ENCODE measurements at regions of chr15 and their contacts with region 1.

Region 1: GRCh38 chr15:41774062-41774881 is at the start of gene MAPKBP1:
- DNase-seq: peak; percentile 93
- H3K4me3 ChIP-seq: peak within 1 kb of the TSS; percentile 90
- CTCF ChIP-seq: peak; percentile 99

Region 2: DNA sequence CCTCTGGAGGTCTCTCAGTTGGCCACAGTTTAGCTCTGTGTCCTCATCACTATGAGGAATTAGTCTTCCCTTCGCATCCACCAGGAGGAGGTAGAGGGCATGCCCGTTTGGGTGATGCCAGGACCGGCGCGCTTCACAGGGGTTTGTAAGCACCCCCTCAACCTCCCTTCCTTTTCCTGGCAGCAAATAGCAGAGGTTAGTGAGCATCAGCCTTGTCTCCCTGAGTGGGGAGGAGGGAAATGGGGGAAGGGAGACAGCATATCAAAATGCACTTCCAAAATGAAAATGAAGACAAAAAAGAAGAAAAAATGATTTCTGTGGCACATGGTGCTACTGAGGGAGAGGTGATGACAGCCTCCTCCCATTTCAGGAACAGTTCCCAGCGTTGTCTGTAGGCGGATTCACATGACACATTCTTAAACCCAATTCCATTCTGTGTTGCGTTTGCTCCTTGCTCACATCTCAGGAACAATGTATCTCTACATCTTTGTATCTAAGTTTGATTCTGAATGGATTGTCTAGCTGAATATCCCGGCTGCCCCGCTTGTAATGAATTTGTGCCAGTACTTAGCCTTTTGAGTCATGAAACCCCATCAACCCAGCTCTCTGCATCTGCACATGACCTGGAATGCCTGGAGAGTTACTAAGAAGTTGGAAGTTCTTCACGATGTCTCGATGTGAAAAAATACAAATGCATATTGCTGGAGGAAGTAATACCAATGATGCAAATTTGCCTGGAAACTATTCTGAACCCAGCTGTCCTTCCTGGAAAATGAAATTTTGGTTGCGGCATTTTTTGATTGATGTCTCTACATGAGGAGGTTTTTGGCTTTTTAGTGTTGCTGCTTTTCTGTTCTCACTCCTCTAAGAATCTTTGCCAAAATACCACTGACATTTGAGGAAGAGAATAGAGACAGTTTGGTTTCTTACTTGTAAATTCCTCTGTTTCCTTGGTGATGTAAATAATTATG is 170.0 kb before region 1 on chr15:
- CTCF ChIA-PET with region 1: interaction called, 20 read pairs
- POLR2A ChIA-PET with region 1: interaction called, 3 read pairs
- DNase-seq: peak; percentile 47
- H3K4me3 ChIP-seq: peak overlapping the region; percentile 50
- CTCF ChIP-seq: peak; percentile 86

Region 3: DNA sequence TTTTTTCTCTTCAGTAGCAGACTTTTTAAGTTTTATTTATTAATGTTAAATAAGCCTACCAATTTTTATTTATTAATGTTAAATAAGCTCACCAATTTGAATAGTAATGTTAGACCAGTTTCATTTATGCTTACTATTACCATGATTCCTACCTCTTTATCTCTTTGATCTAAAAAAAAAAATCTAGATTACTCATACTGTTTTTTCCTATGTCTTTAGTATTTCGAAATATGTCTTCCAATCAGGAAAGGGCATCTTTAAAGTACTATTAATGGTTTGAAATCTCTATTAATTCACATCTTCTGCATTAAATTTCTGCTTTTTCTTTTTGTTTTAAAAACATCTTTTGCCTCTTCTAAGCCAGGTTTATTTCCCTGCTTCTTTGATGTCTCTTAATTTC is 27.5 kb before region 1 on chr15:
- CTCF ChIA-PET with region 1: interaction called, 15 read pairs
- POLR2A ChIA-PET with region 1: no interaction called
- DNase-seq: no peak
- H3K4me3 ChIP-seq: no peak overlapping the region
- CTCF ChIP-seq: no peak

Region 4: DNA sequence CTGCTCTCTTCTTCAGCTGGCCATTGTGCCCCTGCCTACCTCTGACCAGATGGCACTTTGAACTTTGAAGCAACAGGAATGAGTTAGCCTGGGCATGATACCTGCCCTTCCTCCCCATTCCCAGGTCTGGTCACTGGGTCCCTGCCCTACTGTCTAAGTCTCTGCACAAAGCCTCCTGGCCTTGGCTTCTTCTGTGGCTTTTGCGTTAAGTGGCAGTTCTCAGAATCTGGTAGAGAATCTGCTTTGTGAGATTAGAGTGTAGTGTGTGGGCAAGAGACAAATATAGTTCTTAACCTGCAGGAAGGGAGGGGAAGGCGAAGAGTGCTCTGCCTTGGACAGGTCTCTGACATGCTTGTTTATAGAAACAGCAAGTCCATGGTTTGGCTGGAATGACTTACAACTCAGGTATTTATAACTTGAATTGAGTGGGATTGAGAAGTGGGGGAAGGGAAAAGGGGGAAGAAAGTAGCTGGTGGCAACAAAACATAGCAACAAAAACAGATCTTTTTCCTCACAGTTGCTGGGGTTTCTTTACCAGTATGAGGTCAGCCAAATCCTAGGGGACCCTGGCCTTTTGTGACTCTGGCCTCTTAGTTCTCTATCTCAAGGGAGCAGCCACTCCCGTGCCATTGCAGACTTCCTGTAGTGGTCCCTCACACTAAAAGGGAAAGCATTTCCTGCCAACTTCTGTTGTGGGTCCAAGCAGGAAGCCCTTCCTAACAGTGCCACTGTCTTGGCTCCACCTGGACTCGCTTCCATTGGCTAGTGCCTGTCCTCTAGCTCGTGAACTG is 16.7 kb after region 1 on chr15:
- CTCF ChIA-PET with region 1: interaction called, 163 read pairs
- POLR2A ChIA-PET with region 1: interaction called, 7 read pairs
- DNase-seq: no peak
- H3K4me3 ChIP-seq: no peak overlapping the region
- CTCF ChIP-seq: no peak

Region 5: GRCh38 chr15:41820791-41821423 is 46.6 kb after region 1 on chr15:
- CTCF ChIA-PET with region 1: interaction called, 756 read pairs
- POLR2A ChIA-PET with region 1: no interaction called
- DNase-seq: no peak
- H3K4me3 ChIP-seq: no peak overlapping the region
- CTCF ChIP-seq: no peak

Region 6: DNA sequence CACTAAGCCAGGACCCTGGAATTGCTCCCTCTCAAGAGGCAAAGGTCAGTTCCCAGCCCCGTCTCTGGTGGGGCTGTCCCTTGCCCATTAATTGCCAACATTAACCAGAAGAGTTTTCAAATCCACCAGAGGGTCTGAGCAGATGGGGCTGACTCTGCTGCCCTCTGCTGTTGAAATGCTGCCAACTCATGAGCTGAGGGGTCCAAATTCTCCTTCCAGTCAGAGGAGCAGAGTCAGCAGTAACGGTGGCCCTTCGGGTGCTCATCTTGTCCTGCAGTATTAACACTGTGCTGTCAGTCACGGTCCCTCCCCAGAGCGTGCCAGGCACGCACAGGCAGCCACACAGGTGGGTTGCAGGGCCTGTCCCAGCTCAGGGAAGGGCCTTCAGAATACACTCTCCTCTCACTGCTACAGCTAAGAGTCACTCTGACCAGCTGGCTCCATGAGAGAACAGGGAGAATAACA is 130.3 kb after region 1 on chr15:
- CTCF ChIA-PET with region 1: interaction called, 77 read pairs
- POLR2A ChIA-PET with region 1: no interaction called
- DNase-seq: no peak
- H3K4me3 ChIP-seq: no peak overlapping the region
- CTCF ChIP-seq: peak; percentile 91

Measured in AG04449 (cell line).